A673 (cell line): ENCODE measurements at regions of chr12 and their contacts with region 1.

Region 1: DNA sequence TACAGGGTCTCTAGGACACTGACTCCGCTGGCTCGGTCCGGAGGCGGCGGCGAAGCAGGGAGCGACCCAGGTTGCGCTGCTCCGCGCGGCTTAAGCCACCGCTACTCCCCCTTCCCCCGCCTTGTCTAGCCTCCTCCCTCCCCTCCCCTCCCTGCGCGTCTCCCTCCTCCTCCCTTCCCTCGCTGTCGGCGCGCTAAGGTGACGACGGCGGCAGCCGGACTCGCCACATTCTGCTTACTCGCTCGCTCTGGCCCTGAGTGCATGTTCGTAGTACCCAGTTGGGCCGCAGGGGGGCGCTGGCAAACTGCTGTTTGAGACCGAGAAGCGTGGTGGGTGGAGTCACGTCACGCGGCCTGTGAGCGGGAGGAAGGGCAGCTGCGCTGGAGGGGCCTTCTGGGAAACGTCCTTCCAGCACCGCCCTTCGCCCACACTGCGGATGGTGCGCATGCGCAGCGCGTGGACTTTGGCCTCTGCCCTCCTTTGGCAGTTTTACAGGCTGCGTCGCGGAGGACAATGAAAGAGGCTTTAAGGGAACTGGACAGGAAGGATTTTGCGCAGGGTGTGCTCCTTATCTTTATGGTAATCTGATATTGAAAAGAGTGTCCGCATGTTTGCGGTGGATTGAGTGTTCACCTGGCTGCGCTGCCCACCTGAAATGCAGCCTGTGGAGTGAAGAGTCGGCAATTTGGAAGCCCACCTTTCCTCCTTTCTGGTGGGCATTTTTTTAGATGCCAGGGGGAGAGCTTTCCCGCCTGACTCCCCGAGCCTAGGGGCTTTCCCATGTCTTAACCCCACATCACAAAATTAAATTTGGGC is at the start of gene SCAF11:
- DNase-seq: peak; percentile 100
- H3K4me3 ChIP-seq: peak within 1 kb of the TSS; percentile 94
- H3K27ac ChIP-seq: peak within 1 kb of the TSS; percentile 99
- H3K4me1 ChIP-seq: peaks cover 18% of the 10 kb centered on the region
- H3K27me3 ChIP-seq: no peaks in the 10 kb centered on the region
- CTCF ChIP-seq: peak; percentile 99
- total RNA-seq, gene SCAF11: 105 and 121 TPM in 2 replicates

Region 2: DNA sequence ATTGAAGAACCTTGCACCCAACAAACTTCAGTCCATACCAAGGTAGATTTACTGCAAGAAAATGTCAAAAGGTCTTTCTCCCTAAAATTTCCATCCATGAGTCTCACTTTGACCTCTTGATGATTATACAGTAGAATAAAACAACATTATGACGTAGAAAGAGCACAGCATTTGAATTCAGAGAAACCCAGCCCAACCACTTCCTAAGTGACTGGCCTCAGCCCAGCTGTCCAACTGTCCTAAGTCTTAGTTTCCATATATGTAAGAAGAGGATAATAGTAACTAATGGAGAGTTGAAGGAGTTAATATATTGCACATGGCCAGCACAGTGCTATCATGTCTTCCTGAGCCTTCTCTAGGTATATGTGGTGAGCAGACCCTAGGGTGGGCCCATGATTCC is 1073.5 kb before region 1 on chr12:
- CTCF ChIA-PET with region 1: no interaction called
- POLR2A ChIA-PET with region 1: no interaction called
- intact Hi-C with region 1: no loop called
- DNase-seq: no peak
- H3K4me3 ChIP-seq: no peak overlapping the region
- H3K27ac ChIP-seq: no peak overlapping the region
- H3K4me1 ChIP-seq: no peaks in the 10 kb centered on the region
- H3K27me3 ChIP-seq: no peaks in the 10 kb centered on the region
- CTCF ChIP-seq: no peak

Region 3: DNA sequence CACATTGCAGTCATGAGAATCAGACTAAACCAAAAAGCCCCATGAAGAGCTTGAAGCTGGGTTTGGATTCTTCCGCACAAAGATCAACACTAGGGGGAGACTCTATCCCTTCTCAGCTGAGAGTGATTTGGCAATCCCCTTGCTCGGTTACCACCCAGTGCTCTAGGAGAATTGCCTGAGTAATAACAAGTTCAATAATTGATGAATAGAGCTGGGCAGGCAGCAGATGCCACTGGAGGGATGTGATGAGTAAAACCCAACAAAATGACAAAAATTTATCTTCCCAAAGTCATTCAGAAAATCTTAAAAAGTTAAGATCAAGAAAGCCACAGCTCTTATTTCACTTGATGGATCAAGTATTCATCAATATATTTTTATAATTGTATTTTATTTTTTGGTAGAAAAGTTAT is 446.8 kb before region 1 on chr12:
- CTCF ChIA-PET with region 1: no interaction called
- POLR2A ChIA-PET with region 1: interaction called, 3 read pairs
- intact Hi-C with region 1: loop called (anchors 10 kb)
- DNase-seq: peak; percentile 90
- H3K4me3 ChIP-seq: no peak overlapping the region
- H3K27ac ChIP-seq: no peak overlapping the region
- H3K4me1 ChIP-seq: peaks cover 33% of the 10 kb centered on the region
- H3K27me3 ChIP-seq: no peaks in the 10 kb centered on the region
- CTCF ChIP-seq: peak; percentile 90

Region 4: DNA sequence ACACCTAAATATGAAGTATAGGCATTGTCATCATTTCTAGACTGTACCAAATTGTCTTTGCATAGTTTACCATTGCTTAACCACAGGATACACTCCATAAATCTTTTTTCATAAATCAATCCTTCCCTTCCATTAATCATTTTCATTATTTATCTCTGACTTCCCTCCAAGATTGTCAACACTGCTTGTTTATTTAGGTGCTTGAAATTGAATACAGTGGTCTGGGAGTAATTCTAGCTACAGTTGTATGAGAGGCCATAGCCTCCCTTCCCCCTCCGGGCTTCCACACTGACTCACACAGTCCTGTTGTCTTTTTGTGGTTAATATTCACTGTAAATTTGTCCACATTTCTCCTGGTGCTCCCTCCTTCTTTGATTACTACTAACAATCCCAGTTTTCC is 375.4 kb before region 1 on chr12:
- CTCF ChIA-PET with region 1: no interaction called
- POLR2A ChIA-PET with region 1: no interaction called
- intact Hi-C with region 1: no loop called
- DNase-seq: no peak
- H3K4me3 ChIP-seq: no peak overlapping the region
- H3K27ac ChIP-seq: no peak overlapping the region
- H3K4me1 ChIP-seq: no peaks in the 10 kb centered on the region
- H3K27me3 ChIP-seq: no peaks in the 10 kb centered on the region
- CTCF ChIP-seq: no peak

Region 5: GRCh38 chr12:45728630-45729232 is 261.9 kb before region 1 on chr12:
- CTCF ChIA-PET with region 1: no interaction called
- POLR2A ChIA-PET with region 1: interaction called, 3 read pairs
- intact Hi-C with region 1: loop called (anchors 5 kb)
- DNase-seq: peak; percentile 99
- H3K4me3 ChIP-seq: peak overlapping the region; percentile 94
- H3K27ac ChIP-seq: peak overlapping the region; percentile 99
- H3K4me1 ChIP-seq: peaks cover 30% of the 10 kb centered on the region
- H3K27me3 ChIP-seq: no peaks in the 10 kb centered on the region
- CTCF ChIP-seq: peak; percentile 86

Region 6: DNA sequence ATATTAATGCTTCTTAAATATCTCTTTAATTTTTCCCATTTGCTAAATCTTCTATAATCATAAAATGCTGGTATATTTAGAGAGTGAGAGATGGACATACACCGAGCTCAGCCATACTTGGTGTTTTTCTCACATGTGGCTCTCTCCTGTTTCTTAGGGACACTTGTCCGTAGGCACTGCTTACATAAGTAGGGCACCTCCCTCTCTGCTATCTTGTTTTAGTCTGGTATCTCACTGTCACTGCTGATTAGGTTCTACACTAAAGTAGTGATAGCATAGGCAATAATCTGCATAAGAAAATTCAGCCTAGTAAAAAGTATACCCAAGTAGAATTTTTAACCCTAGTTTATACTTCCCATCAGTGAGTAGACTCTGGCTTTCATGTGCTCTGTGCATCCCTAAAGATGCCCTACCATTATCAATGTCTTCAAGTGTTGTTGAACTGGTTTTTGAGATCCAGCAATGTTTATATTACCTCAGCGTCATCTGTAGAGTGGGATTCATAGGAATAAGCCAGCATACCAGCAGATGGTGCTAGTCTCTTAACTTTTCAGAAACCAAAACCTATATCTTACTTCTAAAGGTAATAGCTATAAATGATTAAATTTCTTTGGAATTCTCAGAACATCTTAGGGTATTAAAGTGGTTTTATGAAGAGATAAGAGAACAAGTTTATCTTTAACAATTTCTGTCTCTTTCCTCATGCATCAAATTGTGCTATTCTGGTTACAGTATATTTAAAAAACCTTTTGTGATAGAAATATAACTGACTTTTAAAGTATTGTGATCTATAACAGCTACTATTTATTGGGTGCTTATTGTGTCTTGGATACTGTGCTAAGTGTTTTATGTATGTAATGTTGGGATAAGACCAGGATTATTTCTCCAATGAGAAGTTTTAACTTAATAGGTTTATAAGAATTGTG is 228.2 kb before region 1 on chr12:
- CTCF ChIA-PET with region 1: no interaction called
- POLR2A ChIA-PET with region 1: no interaction called
- intact Hi-C with region 1: loop called (anchors 10 kb)
- DNase-seq: peak; percentile 68
- H3K4me3 ChIP-seq: no peak overlapping the region
- H3K27ac ChIP-seq: peak overlapping the region; percentile 8
- H3K4me1 ChIP-seq: peaks cover 9% of the 10 kb centered on the region
- H3K27me3 ChIP-seq: no peaks in the 10 kb centered on the region
- CTCF ChIP-seq: peak; percentile 83

Region 7: GRCh38 chr12:46024099-46024498 is 33.4 kb after region 1 on chr12:
- CTCF ChIA-PET with region 1: no interaction called
- POLR2A ChIA-PET with region 1: no interaction called
- intact Hi-C with region 1: no loop called
- DNase-seq: no peak
- H3K4me3 ChIP-seq: no peak overlapping the region
- H3K27ac ChIP-seq: no peak overlapping the region
- H3K4me1 ChIP-seq: no peaks in the 10 kb centered on the region
- H3K27me3 ChIP-seq: no peaks in the 10 kb centered on the region
- CTCF ChIP-seq: no peak